Activated T-helper 2 cell treated with anti-CD3 and anti-CD28 coated beads, Interferon-gamma antibody, Interleukin-2, Interleukin-4, amounts not matched to agents 10 μg/mL and 5 μg/mL and 100 μg/mL, durations not matched to agents 14 hours and 24 hours and 36 hours (primary cell): ENCODE measurements at regions of chr19 and their contacts with region 1.

Region 1: DNA sequence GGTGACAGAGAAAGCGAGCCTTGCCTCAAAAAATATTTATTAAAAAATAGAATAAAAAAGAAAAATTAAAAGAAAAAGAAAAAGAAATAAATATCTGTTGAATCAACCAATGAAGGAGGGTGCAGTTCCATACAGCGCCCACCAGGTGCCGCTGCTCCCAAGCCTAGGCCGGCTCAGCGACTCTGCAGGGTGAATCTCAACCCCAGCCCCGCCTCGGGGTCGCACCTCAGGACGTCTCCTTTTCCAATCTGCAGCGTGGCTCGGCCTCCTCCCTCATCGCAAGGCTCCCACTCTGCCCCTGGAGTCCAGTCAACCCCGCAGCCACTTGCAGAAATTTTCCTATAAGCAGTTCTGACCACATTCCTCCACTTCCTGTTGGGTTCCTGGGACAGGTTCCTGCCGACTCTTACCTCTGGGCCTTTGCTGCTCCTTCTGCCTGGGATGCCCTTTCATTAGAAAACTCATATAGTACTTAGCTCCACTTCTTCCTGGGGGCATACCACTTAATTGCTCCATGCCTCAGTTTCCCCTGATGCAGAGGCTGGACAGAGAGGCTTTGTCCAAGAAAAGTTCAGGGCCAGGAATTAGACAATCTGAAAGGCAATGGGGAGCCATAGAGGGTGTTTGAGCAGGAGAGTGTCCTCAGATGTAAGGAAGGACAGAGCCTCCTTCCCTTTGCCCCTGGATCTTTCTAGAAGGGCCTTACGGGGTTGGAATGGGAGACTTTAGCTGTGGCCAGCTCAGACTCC is 24.3 kb downstream of the NFILZ start:
- DNase-seq: peak; percentile 47
- H3K4me3 Mint-ChIP-seq: no peak overlapping the region
- H3K27ac Mint-ChIP-seq: no peak overlapping the region
- H3K4me1 Mint-ChIP-seq: peaks cover 21% of the 10 kb centered on the region
- H3K27me3 Mint-ChIP-seq: peaks cover 18% of the 10 kb centered on the region

Region 2: GRCh38 chr19:8697671-8698432 is 43.1 kb after region 1 on chr19:
- intact Hi-C with region 1: loop called (anchors 1 kb)
- DNase-seq: no peak
- H3K4me3 Mint-ChIP-seq: no peak overlapping the region
- H3K27ac Mint-ChIP-seq: no peak overlapping the region
- H3K4me1 Mint-ChIP-seq: peaks cover 51% of the 10 kb centered on the region
- H3K27me3 Mint-ChIP-seq: peaks cover 23% of the 10 kb centered on the region